Heart left ventricle (tissue), 16 donors: ENCODE measurements at regions of chr11 and their contacts with region 1.

Region 1: DNA sequence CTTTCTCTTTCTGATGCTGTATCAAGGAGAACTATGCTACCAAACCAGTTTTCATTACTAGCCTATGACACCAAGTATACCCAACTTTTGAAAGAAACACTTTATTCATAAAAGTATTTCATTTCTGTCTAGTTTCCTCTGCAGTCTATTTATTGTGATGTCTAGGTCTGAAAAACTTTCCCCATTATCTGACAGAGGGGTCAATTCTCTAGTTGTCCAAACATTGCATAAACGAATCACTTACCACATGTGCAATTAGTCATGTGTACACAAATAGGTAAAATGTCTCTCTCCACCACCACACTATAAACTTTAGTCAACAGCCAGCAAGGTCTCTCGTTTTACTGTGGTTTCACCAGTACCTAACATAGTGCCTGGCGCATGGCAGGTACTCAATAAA is 8.2 kb downstream of the PGR start:
- DNase-seq: no peak
- ATAC-seq: no peak
- H3K4me3 ChIP-seq: no peak overlapping the region
- H3K27ac ChIP-seq: no peak overlapping the region
- H3K4me1 ChIP-seq: peaks cover 0 to 23% (median 5%) of the 10 kb centered on the region in 12 donors
- H3K27me3 ChIP-seq: no peaks in the 10 kb centered on the region
- CTCF ChIP-seq: no peak
- POLR2A ChIP-seq: no peak

Region 2: GRCh38 chr11:100930185-100930778 is 191.1 kb before region 1 on chr11:
- intact Hi-C with region 1: no loop called
- DNase-seq: no peak
- ATAC-seq: peak in 3 of 4 donors; percentile 38 to 72 (median 49)
- H3K4me3 ChIP-seq: no peak overlapping the region
- H3K27ac ChIP-seq: no peak overlapping the region
- H3K4me1 ChIP-seq: no peaks in the 10 kb centered on the region
- H3K27me3 ChIP-seq: no peaks in the 10 kb centered on the region
- CTCF ChIP-seq: peak; percentile 49 to 77 (median 69)
- POLR2A ChIP-seq: no peak

Region 3: GRCh38 chr11:101100601-101101000 is 20.8 kb before region 1 on chr11:
- intact Hi-C with region 1: loop called in 1 of 10 experiments (anchors 2 kb)
- DNase-seq: no peak
- ATAC-seq: no peak
- H3K4me3 ChIP-seq: no peak overlapping the region
- H3K27ac ChIP-seq: peak overlapping the region in 1 of 12 donors; percentile 3
- H3K4me1 ChIP-seq: peaks cover 0 to 40% (median 9%) of the 10 kb centered on the region in 12 donors
- H3K27me3 ChIP-seq: no peaks in the 10 kb centered on the region
- CTCF ChIP-seq: no peak
- POLR2A ChIP-seq: no peak